ENCODE measurements at regions of chr6 and their contacts with region 1.

Region 1: DNA sequence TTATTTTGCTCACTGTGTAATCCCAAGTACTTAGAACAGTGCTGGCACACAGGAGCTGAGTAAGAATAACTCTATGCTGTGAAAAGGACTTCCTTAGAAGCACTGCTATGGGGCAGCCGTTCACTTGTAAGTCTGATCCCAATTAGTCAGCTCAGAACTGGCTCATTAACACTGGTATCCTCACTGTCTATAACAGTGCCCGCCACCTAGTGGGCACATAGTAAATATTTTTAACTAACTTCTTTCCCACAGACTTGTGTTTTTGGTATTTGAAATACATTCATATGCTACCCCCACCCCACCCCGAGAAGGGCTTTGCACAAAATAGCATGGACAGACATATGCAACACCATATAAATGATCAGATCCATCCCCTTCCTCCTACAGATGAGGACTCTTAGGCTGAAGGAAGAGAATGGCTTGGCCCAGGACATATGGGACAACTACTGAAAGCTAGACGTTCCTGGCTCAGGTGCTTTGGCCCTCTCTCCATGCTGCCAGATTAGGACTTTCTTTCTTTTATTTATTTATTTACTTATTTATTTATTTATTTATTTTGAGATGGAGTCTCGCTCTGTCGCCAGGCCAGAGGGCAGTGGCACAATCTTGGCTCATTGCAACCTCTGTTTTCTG is 47.1 kb downstream of the DST start:
- DNase-seq: peak in 4 of 5 donors; percentile 20 to 28 (median 24)
- H3K4me3 ChIP-seq: no peak overlapping the region
- H3K4me3 Mint-ChIP-seq: peak overlapping the region in 1 of 8 donors; percentile 2
- H3K27ac ChIP-seq: no peak overlapping the region
- H3K27ac Mint-ChIP-seq: peak overlapping the region in 1 of 7 donors; percentile 42
- H3K4me1 ChIP-seq: peaks cover 17% of the 10 kb centered on the region
- H3K4me1 Mint-ChIP-seq: peaks cover 13 to 25% (median 20%) of the 10 kb centered on the region in 4 donors
- H3K27me3 ChIP-seq: no peaks in the 10 kb centered on the region
- H3K27me3 Mint-ChIP-seq: no peaks in the 10 kb centered on the region

Region 2: GRCh38 chr6:56581296-56581925 is 14.2 kb before region 1 on chr6:
- CTCF ChIA-PET with region 1: interaction called, 17 read pairs
- POLR2A ChIA-PET with region 1: no interaction called
- intact Hi-C with region 1: no loop called
- DNase-seq: no peak
- H3K4me3 ChIP-seq: no peak overlapping the region
- H3K4me3 Mint-ChIP-seq: no peak overlapping the region
- H3K27ac ChIP-seq: no peak overlapping the region
- H3K27ac Mint-ChIP-seq: peak overlapping the region in 2 of 7 donors; percentile 43 to 49
- H3K4me1 ChIP-seq: no peaks in the 10 kb centered on the region
- H3K4me1 Mint-ChIP-seq: no peaks in the 10 kb centered on the region
- H3K27me3 ChIP-seq: no peaks in the 10 kb centered on the region
- H3K27me3 Mint-ChIP-seq: peaks cover 0 to 3% of the 10 kb centered on the region in 2 donors

Region 3: DNA sequence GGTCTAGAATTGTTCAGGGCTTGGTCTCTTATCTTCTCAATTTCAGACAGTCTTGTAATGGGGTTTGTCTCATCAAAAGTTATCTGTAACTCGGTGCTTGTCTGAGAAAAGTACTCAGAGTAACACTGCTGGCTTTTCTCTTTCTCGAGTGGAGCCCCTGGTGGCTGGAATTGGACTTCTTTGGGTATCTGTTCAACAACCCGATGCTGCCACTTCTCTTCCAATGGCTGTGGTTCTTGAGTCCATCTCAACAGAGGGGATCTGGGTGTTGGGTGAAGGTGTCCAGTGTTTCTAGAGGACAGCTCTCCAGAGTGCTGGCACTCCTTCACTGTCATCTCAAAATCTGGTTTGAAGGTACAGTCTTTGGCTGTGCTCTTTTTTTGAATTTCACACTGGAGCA is 22.4 kb after region 1 on chr6:
- CTCF ChIA-PET with region 1: interaction called, 24 read pairs
- POLR2A ChIA-PET with region 1: no interaction called
- intact Hi-C with region 1: no loop called
- DNase-seq: no peak
- H3K4me3 ChIP-seq: no peak overlapping the region
- H3K4me3 Mint-ChIP-seq: no peak overlapping the region
- H3K27ac ChIP-seq: no peak overlapping the region
- H3K27ac Mint-ChIP-seq: no peak overlapping the region
- H3K4me1 ChIP-seq: no peaks in the 10 kb centered on the region
- H3K4me1 Mint-ChIP-seq: no peaks in the 10 kb centered on the region
- H3K27me3 ChIP-seq: no peaks in the 10 kb centered on the region
- H3K27me3 Mint-ChIP-seq: peaks cover 0 to 3% of the 10 kb centered on the region in 2 donors